ENCODE measurements at regions of chr4 and their contacts with region 1.

Region 1: GRCh38 chr4:153181293-153181692 is 22.9 kb upstream of the TRIM2 start:
- DNase-seq: peak; percentile 27
- ATAC-seq: no peak
- H3K4me3 ChIP-seq: no peak overlapping the region
- H3K27ac ChIP-seq: no peak overlapping the region
- H3K4me1 ChIP-seq: peaks cover 4% of the 10 kb centered on the region; the same call in 1 of the 2 replicates
- H3K27me3 ChIP-seq: no peaks in the 10 kb centered on the region; the same call in 1 of the 2 replicates
- CTCF ChIP-seq: no peak
- POLR2A ChIP-seq: no peak
- RAD21 ChIP-seq: no peak

Region 2: DNA sequence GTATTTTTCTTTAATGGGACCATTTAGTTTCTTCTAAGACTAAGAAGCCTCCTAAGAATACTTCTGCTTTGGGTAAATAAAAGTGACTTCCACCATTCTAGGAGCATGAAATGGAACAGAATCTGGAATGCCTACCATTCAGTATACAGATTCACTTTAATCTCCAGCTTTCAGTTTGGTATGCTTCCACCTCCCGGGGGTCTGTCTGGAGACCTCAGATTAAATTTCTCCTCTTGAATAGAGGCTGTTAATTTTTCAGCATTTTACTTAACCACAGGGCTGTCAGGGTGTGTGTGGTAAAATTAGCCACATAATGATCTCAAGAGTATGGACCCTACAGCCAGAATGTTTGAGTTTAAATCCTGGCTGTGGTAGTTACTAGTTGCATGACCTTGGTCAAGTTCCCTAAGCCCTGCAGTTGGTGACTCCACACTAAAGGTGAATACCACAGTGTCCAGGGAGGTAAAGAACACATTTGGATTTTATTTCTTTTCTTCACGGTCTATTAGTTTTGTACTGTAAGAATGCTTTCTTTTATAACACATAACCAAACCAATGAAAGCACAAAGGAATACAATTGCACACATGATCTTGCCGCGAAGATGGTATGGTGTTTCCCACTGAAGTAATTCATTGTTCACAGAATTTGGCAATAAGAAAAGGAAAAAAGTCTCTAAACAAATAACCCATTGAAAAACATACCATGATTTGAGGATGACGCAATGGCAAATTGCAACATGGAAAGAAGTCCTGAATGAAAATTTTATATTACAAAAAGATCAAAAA is 14.4 kb before region 1 on chr4:
- CTCF ChIA-PET with region 1: no interaction called
- POLR2A ChIA-PET with region 1: interaction called, 16 read pairs
- dilution Hi-C with region 1: no loop called
- in situ Hi-C with region 1: no loop called
- intact Hi-C with region 1: no loop called
- DNase-seq: peak; percentile 43
- ATAC-seq: no peak
- H3K4me3 ChIP-seq: no peak overlapping the region
- H3K27ac ChIP-seq: no peak overlapping the region
- H3K4me1 ChIP-seq: peaks cover 2% of the 10 kb centered on the region
- H3K27me3 ChIP-seq: peaks cover 2% of the 10 kb centered on the region
- CTCF ChIP-seq: no peak
- POLR2A ChIP-seq: no peak
- RAD21 ChIP-seq: no peak

Measured in IMR-90 (cell line).